ENCODE measurements at regions of chr1 and their contacts with region 1.

Region 1: GRCh38 chr1:217495249-217495648 is 135.6 kb downstream of the GPATCH2 start:
- DNase-seq: no peak

Region 2: DNA sequence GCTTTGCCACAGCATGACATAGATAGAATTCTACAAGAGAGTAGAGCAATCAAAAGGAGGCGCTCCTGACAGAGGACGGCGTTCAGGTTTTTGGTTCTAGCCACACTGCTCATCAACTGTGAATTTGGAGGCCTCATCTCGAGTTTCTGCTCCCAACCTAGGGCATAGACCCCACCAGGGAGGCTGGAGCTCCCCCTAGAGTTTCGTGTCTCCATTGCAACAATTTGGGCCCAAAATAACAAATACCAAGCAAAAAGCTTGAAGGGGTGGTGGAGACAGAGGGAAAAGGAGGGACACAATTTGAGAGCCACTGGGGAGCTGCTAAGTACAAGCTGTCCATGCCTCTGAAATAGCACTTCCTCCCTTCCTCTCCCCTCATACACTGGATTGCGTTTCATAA is 161.3 kb before region 1 on chr1:
- in situ Hi-C with region 1: no loop called
- DNase-seq: peak; percentile 7

Region 3: DNA sequence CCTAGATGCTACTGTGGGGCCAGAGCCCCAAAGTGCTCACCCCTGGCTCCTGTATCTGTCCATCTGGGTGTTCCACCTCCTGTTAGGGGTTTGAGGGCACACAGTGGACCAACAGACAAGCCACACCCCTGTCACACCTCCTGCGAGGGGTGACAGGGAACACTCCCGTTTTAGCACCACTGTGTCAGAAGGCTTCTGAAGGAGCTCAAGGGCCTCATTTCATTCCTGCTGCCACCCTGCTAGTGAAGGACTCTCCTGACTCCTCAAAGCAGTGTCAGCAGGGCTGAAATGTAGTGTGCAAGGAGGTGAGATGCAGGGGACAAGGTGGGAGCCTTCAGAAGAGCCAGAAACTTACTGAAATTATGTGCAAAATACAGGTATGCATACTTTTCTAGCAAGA is 39.0 kb before region 1 on chr1:
- in situ Hi-C with region 1: loop called (anchors 5 kb)
- DNase-seq: no peak

Region 4: DNA sequence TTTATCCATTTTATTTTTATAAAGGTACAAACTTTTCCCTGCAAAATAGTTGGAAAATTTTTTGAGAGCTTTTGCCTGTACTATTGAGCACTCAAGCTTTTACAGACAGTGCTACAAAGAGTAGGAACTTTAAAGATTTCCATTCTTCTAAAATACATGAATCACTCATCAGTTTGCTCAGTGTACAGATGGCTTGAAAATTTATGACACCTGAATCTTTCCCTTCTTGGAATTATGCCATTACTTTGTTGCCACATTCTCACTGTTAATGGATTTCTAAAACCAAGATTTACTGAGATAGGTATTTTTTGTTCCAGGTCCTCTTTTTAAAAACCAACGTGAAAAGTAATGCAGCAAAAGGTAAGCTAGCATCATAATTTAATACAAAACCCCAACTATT is 59.6 kb after region 1 on chr1:
- in situ Hi-C with region 1: no loop called
- DNase-seq: peak; percentile 12